Activated naive CD4-positive, alpha-beta T cell treated with anti-CD3 and anti-CD28 coated beads for 36 hours (primary cell): ENCODE measurements at regions of chr1 and their contacts with region 1.

Region 1: DNA sequence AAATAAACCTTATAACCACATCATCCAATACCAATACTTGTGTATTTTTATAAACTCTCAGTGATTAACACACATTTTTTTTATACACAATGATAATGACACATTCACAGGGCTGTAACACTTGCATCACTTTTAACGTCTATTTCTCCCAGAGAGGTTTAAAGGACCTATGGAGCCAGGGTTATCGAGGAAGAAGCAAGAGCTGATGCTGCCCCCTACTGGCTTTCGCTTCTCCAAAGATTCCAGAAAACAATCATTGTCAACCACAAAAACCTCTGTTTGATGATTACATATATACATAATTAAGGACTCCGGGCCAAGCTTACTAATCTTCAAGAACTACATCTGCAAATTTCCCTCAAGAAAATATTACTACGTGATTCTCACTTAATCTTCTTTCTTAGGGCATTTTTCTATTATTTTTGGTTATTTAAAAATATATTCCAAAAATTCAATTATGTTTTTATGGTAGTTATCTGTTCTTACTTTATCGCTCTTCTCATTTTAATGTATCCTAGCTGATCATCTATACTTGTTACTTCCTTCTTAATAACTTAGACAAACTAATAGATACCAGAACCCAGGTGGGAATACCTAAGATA is 214.5 kb downstream of the VAV3 start:
- DNase-seq: peak; percentile 73
- H3K4me3 Mint-ChIP-seq: no peak overlapping the region
- H3K27ac Mint-ChIP-seq: no peak overlapping the region
- H3K4me1 Mint-ChIP-seq: no peaks in the 10 kb centered on the region
- H3K27me3 Mint-ChIP-seq: no peaks in the 10 kb centered on the region

Region 2: DNA sequence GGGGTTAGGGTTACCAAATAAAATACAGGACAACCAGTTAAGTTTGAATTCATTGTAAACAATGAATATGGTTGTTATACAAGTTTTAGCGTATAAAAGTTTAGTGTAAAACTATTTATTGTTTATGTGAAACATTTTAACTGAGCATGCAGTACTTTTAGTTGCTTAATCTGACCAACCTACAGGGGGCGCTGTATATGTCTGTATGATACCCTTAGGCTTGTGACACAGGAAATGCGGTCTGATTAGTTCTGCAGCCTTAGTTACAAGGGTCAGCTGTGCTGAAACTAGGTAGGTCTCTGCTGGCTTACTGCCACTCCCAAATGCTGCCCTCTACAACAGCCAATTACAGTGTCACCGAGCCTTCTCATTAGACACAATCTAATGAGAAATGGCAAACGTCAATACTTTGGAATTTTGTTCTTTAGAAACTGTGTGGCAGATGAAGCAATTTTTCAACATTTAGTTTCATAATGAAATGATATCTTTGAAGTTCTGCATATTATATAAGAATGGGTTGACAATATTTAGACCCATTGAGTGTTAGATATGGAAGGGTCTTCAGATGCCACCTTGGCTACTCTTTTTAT is 553.4 kb before region 1 on chr1:
- CTCF ChIA-PET with region 1: no interaction called
- intact Hi-C with region 1: loop called (anchors 5 kb)
- DNase-seq: peak; percentile 19
- H3K4me3 Mint-ChIP-seq: no peak overlapping the region
- H3K27ac Mint-ChIP-seq: no peak overlapping the region
- H3K4me1 Mint-ChIP-seq: no peaks in the 10 kb centered on the region
- H3K27me3 Mint-ChIP-seq: peaks cover 2% of the 10 kb centered on the region

Region 3: GRCh38 chr1:107277022-107277421 is 473.4 kb before region 1 on chr1:
- CTCF ChIA-PET with region 1: no interaction called
- intact Hi-C with region 1: loop called (anchors 5 kb)
- DNase-seq: peak; percentile 16
- H3K4me3 Mint-ChIP-seq: no peak overlapping the region
- H3K27ac Mint-ChIP-seq: no peak overlapping the region
- H3K4me1 Mint-ChIP-seq: no peaks in the 10 kb centered on the region
- H3K27me3 Mint-ChIP-seq: peaks cover 2% of the 10 kb centered on the region

Region 4: DNA sequence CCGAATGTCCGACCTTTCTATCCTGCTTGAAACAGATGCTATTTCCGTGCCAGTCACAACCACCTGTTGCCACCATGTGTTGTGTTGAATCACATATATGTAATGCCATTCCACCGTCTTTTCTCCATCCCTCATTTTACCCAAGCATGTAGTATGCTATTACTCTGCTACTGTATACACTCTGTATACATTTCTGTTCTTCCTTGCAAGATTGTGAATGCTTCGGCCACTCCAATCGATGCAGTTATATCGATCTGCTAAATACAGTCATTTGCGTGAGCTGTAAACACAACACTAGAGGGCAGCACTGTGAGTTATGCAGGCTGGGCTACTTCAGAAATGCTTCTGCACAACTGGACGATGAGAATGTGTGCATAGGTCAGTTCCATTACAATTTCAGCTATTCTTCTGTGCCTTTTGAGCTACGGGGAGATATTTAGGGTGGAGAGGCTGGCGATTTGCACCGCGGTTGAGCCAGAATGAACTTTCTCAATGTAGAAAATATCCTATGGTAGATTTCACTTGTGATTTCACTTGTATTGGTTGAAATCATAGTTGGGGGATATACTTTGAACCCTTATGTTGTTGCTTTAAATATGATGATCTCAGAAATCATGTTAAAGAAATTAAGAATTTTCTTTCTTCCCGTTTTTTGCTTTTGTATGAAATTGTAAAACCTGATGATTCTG is 319.8 kb before region 1 on chr1:
- CTCF ChIA-PET with region 1: interaction called, 3 read pairs
- intact Hi-C with region 1: loop called (anchors 1 kb)
- DNase-seq: peak; percentile 28
- H3K4me3 Mint-ChIP-seq: no peak overlapping the region
- H3K27ac Mint-ChIP-seq: no peak overlapping the region
- H3K4me1 Mint-ChIP-seq: no peaks in the 10 kb centered on the region
- H3K27me3 Mint-ChIP-seq: peaks cover 7% of the 10 kb centered on the region

Region 5: DNA sequence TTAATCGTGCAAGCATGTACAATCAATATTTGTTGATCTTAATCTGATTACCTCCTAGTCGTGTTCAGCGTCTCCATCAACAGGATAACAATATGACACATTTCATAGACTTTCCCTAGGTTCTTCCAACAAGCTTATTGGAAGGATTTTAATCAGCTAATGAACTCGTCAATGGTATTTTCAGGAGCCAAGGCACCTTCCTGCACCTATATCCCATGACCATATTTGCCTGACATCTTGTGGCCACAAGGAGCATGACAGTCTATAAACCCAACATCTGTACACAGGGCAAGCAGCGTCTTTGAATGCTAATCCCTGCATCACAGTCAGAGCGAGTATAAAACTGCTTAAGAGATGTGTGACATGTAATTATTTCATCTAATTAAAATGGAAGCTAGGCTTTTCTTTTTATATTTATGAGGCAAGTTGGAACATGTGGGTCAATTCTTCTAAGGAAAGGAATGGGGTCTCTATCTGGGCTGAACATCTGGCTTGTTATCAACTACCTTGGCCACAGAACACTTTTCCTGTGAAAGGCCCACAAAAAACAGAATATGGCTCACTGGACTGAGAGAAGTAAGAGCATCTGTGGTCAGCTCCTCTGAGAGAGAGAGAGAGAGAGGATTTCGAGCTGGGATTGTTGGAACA is 220.8 kb before region 1 on chr1:
- CTCF ChIA-PET with region 1: interaction called, 5 read pairs
- intact Hi-C with region 1: loop called (anchors 5 kb)
- DNase-seq: peak; percentile 36
- H3K4me3 Mint-ChIP-seq: no peak overlapping the region
- H3K27ac Mint-ChIP-seq: no peak overlapping the region
- H3K4me1 Mint-ChIP-seq: no peaks in the 10 kb centered on the region
- H3K27me3 Mint-ChIP-seq: peaks cover 19% of the 10 kb centered on the region

Region 6: DNA sequence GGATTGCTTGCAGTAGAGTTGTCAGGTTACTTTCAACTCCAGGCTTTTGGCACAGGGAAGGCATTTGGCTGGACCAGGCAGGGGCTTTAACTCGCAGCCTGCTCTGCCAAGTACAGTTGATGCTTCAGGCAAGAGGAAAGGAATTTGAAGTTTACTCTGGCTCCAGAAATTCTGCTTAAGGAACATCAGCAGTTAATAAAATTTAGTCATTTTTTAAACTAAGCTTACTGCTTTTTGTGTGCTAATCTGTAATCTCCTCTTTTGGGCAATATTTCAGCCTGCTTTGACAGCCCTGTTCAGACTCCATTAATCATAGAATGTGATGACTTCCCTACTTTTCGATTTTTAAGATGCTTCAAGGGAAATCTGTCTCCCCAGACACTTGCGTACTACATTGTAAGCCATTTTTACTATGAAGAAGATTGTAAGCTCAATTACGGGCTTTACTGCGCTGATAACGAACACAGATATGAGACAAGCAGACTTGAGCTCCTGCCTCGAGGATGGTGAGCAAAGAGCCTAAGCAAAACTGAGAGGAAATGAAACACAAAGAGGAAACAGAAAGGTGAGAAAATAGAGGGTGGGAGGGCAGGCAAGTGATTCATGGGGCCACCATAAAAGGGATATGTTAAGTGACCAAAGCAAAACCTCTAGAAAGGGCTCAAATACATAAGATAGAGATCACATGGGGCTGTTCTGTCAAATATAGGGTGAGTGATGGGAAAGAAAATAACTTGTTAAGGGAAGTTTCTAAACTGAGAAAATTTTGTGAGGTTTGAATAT is 291.1 kb after region 1 on chr1:
- CTCF ChIA-PET with region 1: no interaction called
- intact Hi-C with region 1: no loop called
- DNase-seq: peak; percentile 43
- H3K4me3 Mint-ChIP-seq: peak overlapping the region; percentile 14
- H3K27ac Mint-ChIP-seq: peak overlapping the region; percentile 17
- H3K4me1 Mint-ChIP-seq: peaks cover 36% of the 10 kb centered on the region
- H3K27me3 Mint-ChIP-seq: no peaks in the 10 kb centered on the region